ENCODE measurements at regions of chr2 and their contacts with region 1.

Region 1: GRCh38 chr2:85288244-85288725 is 39.5 kb downstream of the TGOLN2 start:
- DNase-seq: no peak
- H3K4me3 ChIP-seq: no peak overlapping the region
- H3K27ac ChIP-seq: no peak overlapping the region
- H3K4me1 ChIP-seq: no peaks in the 10 kb centered on the region
- H3K27me3 ChIP-seq: no peaks in the 10 kb centered on the region
- CTCF ChIP-seq: no peak
- POLR2A ChIP-seq: no peak

Region 2: GRCh38 chr2:85066874-85067351 is 221.4 kb before region 1 on chr2:
- CTCF ChIA-PET with region 1: interaction called, 150 read pairs
- POLR2A ChIA-PET with region 1: no interaction called
- dilution Hi-C with region 1: no loop called
- intact Hi-C with region 1: loop called (anchors 1 kb)
- DNase-seq: peak; percentile 83
- H3K4me3 ChIP-seq: peak overlapping the region in 1 of 3 experiments; percentile 24
- H3K27ac ChIP-seq: no peak overlapping the region
- H3K4me1 ChIP-seq: no peaks in the 10 kb centered on the region
- H3K27me3 ChIP-seq: peaks cover 4 to 7% of the 10 kb centered on the region in 2 experiments
- CTCF ChIP-seq: peak; percentile 76 to 80
- POLR2A ChIP-seq: no peak

Region 3: DNA sequence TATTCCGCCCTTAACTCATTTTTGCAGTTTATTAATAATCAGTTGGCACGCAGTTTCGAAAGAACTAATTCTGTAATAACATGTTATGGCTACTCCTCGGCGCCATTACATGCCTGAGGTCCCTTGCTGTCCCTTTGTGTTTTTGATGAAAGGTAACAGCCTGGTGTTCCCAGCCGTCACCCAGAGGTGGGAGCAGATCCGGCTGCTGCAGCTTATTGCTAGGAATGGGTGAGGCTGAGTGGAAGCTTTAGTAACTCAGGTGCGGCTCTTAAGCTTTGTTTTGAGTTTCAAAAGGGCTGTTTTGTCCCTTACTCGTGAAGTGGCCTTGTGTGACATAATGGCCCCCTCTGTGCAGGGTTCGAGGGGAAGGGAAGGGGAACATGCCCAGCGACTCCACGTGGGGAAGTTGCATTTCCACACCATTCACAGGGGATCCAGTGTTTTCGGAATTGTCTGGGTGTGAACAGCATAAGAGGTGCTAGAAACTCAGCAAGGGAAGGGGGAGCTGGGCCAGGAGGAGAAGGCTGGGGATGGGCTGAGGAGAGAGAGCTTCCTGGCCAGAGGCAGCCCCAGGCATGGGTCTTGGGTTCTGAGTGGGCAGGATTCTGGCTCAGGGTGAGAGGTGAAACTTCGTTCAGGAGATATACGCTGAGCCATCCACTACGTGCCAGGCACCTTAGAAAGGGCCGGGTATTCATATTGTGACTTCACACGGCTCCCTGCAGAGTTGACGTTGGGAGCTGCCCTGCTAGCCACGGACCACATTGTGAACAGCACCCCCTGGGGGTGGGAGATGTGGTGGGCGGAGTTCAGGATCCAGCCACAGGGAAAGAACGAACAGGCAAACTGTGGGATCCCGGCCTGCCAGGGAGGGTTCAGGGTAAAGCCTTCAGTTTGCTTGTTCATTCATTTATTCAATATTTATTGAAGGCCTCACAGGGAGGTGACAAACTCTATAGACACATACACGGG is 44.9 kb before region 1 on chr2:
- CTCF ChIA-PET with region 1: interaction called, 10 read pairs
- POLR2A ChIA-PET with region 1: no interaction called
- dilution Hi-C with region 1: no loop called
- intact Hi-C with region 1: loop called (anchors 2 kb)
- DNase-seq: peak; percentile 30
- H3K4me3 ChIP-seq: no peak overlapping the region
- H3K27ac ChIP-seq: no peak overlapping the region
- H3K4me1 ChIP-seq: peaks cover 15% of the 10 kb centered on the region
- H3K27me3 ChIP-seq: no peaks in the 10 kb centered on the region
- CTCF ChIP-seq: peak; percentile 55 to 70
- POLR2A ChIP-seq: no peak

Region 4: DNA sequence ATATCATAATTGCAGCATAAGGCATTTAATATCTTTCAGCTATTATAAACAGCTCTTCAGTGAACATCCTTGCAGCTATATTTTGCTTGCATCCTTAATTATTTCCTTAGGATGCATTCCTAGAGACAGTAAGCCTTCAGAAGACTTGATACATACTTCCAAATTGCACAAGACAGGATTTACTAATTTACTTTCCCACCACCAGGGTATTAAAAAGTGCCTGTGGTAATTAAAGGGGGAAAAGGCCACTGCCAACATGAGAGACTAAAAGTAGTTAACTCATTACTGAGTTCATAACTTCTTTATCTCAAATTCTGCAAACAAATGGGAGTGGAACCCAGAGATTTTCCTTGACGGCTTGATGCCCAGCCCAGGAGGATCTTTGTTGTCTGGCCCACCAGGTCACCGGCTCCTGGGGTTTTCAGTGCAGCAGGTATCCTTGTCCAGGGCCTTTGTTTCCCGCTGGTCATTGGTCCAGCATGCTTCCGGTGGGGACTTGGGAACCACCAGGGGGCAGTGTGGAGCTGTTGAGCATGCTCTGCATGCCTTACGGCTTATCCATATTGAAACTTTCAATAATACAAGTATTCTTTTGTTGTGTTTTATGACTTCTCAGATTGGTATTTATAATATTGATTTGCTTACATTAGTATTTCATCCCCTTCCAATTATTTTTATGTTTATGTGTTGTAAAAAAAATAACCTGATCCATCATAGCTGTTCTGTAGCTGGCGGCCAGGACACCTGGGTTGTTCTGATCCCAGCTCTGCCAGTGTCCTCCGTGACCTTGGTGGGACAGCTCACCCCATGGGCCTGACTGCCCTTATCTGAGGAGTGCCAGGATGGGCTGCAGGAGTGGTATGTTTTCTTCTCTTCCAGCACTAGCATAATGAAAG is 21.9 kb before region 1 on chr2:
- CTCF ChIA-PET with region 1: interaction called, 25 read pairs
- POLR2A ChIA-PET with region 1: no interaction called
- dilution Hi-C with region 1: no loop called
- intact Hi-C with region 1: loop called (anchors 1 kb)
- DNase-seq: peak; percentile 25
- H3K4me3 ChIP-seq: no peak overlapping the region
- H3K27ac ChIP-seq: no peak overlapping the region
- H3K4me1 ChIP-seq: peaks cover 39% of the 10 kb centered on the region
- H3K27me3 ChIP-seq: no peaks in the 10 kb centered on the region
- CTCF ChIP-seq: peak; percentile 74 to 89
- POLR2A ChIP-seq: no peak

Region 5: DNA sequence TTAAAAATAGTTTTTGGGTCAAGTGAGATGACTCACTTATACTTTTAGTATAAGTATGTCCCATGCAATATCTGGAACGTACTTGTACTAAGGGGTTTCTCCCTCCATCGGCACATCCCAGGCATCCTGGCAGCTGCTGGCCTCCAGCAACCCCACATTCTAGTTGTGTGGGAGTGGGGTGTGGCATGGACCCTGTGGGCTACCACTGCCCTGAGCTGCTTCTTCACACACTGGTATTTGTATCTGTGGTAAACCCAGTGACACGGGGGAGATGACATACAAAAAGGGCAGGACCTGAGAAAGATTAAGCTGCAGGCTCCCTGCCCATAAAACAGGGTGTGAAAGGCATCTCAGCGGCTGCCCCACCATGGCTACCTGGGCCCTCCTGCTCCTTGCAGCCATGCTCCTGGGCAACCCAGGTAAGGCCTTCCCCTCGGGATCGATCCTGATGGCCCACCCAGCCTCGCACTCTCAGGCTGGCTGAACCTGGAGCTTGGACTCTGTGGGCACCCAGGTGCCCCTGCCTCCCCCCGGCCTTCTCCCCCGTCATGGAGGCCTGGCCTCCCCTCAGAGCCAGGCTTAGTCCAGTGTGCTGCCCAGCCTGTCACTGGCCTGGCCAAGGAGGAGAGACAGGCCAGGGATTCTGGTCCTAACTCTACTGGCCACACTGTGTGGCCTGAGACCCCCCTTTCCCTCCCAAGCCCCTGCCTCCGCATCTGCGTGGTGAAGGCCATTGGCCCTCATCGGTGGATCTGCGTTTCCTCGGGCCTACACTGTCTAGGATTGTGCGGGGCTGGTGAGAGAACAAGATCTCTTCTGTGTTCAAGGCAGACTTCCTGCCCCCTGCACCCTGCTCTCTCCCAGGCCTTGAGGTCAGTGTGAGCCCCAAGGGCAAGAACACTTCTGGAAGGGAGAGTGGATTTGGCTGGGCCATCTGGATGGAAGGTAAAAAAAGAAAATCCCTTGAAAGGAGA is 406.1 kb after region 1 on chr2 and contains the start of gene GNLY:
- CTCF ChIA-PET with region 1: no interaction called
- POLR2A ChIA-PET with region 1: no interaction called
- dilution Hi-C with region 1: no loop called
- intact Hi-C with region 1: no loop called
- DNase-seq: no peak
- H3K4me3 ChIP-seq: no peak within 1 kb of the TSS
- H3K27ac ChIP-seq: no peak within 1 kb of the TSS
- H3K4me1 ChIP-seq: no peaks in the 10 kb centered on the region
- H3K27me3 ChIP-seq: no peaks in the 10 kb centered on the region
- CTCF ChIP-seq: no peak
- POLR2A ChIP-seq: no peak
- total RNA-seq, gene GNLY: not detected in 2 replicates

Region 6: GRCh38 chr2:85911814-85912692 is 623.8 kb after region 1 on chr2:
- CTCF ChIA-PET with region 1: no interaction called
- POLR2A ChIA-PET with region 1: no interaction called
- dilution Hi-C with region 1: no loop called
- intact Hi-C with region 1: no loop called
- DNase-seq: no peak
- H3K4me3 ChIP-seq: no peak overlapping the region
- H3K27ac ChIP-seq: no peak overlapping the region
- H3K4me1 ChIP-seq: no peaks in the 10 kb centered on the region
- H3K27me3 ChIP-seq: peaks cover 0 to 1% of the 10 kb centered on the region in 2 experiments
- CTCF ChIP-seq: no peak
- POLR2A ChIP-seq: no peak